GM10248 (cell line): ENCODE measurements at regions of chr1 and their contacts with region 1.

Region 1: GRCh38 chr1:111448918-111449702 is at the starts of genes ATP5PB and WDR77:
- DNase-seq: peak; percentile 98
- CTCF ChIP-seq: no peak

Region 2: GRCh38 chr1:111436726-111437125 is 12.4 kb before region 1 on chr1:
- CTCF ChIA-PET with region 1: interaction called, 25 read pairs
- POLR2A ChIA-PET with region 1: no interaction called
- DNase-seq: no peak
- CTCF ChIP-seq: no peak